ENCODE measurements at regions of chr6 and their contacts with region 1.

Region 1: DNA sequence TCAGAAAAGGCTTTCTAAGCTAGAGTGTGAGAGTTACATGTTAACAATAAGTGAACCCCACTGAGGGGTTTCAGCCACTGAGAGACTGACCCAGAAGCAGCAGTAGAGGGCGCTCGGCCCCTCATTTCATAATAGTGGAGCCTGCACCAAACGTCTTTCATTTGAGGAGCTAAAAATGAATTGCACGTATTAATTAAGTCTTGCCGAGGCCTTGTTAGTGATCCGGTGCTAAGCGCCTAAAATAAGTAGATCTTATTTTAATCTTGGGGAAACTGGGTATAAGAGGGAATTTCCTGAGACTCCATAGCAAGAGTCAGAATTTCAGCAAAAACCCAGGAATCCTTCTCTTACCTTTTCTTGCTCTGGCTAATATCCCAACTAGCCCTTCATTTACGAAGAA is 209.7 kb downstream of the FARS2 start:
- DNase-seq: peak; percentile 45 to 65 (median 60)
- ATAC-seq: peak; percentile 75 to 87 (median 86)
- H3K4me3 ChIP-seq: no peak overlapping the region
- H3K27ac ChIP-seq: peak overlapping the region in 1 of 12 donors; percentile 28
- H3K4me1 ChIP-seq: peaks cover 0 to 16% (median 9%) of the 10 kb centered on the region in 12 donors
- H3K27me3 ChIP-seq: no peaks in the 10 kb centered on the region
- CTCF ChIP-seq: peak; percentile 68 to 94 (median 86)
- POLR2A ChIP-seq: no peak

Region 2: GRCh38 chr6:5665173-5665572 is 194.1 kb after region 1 on chr6:
- intact Hi-C with region 1: loop called in 2 of 10 experiments (anchors 10 kb)
- DNase-seq: no peak
- ATAC-seq: peak in 1 of 4 donors; percentile 33
- H3K4me3 ChIP-seq: no peak overlapping the region
- H3K27ac ChIP-seq: no peak overlapping the region
- H3K4me1 ChIP-seq: peaks cover 0 to 12% (median 0%) of the 10 kb centered on the region in 12 donors
- H3K27me3 ChIP-seq: no peaks in the 10 kb centered on the region
- CTCF ChIP-seq: no peak
- POLR2A ChIP-seq: no peak

Region 3: DNA sequence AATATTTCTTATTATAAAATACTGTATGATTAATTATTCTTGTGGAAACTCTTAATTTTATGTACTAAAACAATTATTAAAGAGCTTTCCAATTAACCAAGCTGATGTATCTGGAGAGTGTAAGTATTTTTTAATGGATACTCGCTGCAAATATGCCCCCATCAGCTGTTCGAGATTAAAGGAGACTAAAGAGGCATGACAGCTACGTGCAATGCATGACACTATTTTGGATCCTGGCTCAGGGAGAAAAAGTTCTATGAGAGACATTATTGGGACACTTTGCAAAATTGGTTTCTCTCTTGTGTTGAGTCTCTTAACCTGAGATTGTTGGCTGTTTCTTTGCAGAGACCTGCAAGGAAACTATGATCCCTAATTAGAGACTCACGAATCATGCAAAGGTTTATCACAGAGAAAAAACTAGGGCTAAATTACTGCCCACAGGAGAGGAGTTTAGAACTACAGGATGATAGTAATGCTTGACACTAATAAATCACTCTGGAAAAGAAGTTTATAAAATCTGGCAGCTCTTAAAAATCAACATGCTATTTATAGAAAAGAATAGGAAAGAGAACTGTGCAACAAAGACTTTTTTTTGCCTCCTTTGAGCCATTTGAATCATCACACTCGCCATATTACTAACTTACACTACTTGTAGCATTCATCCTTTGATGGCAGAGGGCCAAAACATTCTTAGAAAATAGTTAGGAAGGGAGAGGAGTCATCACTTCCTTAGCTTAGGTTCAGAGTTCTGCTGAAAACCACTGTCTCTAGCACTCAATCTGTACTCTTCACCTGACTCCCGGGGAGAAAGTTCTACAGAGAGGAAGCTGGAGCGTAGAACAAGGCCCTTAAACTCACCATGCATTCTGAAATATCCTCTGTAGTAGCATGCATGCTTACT is 510.3 kb after region 1 on chr6:
- intact Hi-C with region 1: loop called in 2 of 10 experiments (anchors 10 kb)
- DNase-seq: no peak
- ATAC-seq: no peak
- H3K4me3 ChIP-seq: no peak overlapping the region
- H3K27ac ChIP-seq: no peak overlapping the region
- H3K4me1 ChIP-seq: peaks cover 0 to 28% (median 0%) of the 10 kb centered on the region in 12 donors
- H3K27me3 ChIP-seq: peaks cover 0 to 14% (median 0%) of the 10 kb centered on the region in 9 donors
- CTCF ChIP-seq: no peak
- POLR2A ChIP-seq: no peak

Region 4: DNA sequence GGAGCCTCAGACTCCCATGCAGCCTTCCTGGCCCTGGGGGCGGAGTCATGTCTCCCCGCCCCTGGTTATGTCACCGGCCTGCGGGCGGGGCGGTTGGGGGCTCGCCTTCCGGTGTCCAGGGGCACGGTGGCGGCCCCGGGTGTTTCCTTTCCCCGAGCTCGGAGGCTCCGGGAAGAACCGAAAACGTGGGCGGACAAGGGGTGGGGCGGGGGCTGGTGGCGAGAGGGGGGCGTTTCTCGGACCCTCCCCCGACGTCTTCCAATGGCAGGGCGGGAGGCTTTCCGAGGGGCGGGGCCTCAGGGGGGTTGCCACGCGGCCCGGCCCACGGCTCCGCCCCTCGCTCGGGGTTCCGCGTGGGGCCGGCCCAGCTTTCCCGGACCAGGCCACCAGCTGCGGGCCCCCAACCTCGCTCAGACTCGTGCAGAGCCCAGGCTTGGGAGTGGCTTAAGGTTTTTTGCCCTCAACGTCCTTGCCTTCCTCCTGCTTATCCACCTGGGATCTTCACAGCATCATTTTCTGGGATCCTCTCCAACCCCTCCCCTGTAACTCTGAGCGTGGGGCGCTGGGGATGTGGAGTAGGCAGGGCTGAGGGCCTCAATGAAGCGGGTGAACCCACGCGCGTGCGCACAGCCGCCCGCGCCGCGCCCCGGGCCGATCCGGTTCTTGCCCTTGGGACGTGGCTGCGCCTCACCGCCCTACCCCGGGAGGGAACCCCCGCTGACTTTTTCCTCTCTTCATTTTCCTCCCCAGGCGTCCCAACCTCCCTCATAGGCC is 537.8 kb after region 1 on chr6:
- intact Hi-C with region 1: loop called in 1 of 10 experiments (anchors 10 kb)
- DNase-seq: peak; percentile 72 to 88 (median 81)
- ATAC-seq: peak; percentile 81 to 87 (median 82)
- H3K4me3 ChIP-seq: peak overlapping the region; percentile 6 to 65 (median 60)
- H3K27ac ChIP-seq: peak overlapping the region in 11 of 12 donors; percentile 35 to 89 (median 68)
- H3K4me1 ChIP-seq: peaks cover 0 to 44% (median 20%) of the 10 kb centered on the region in 12 donors
- H3K27me3 ChIP-seq: peaks cover 46 to 89% (median 69%) of the 10 kb centered on the region in 9 donors
- CTCF ChIP-seq: no peak
- POLR2A ChIP-seq: no peak

Region 5: GRCh38 chr6:6547110-6547879 is 1076.3 kb after region 1 on chr6:
- intact Hi-C with region 1: loop called in 5 of 10 experiments (anchors 2 to 10 kb)
- DNase-seq: peak; percentile 84 to 90 (median 89)
- ATAC-seq: peak; percentile 95 to 97 (median 96)
- H3K4me3 ChIP-seq: peak overlapping the region; percentile 30 to 58 (median 52)
- H3K27ac ChIP-seq: peak overlapping the region in 5 of 12 donors; percentile 17 to 61 (median 47)
- H3K4me1 ChIP-seq: peaks cover 2 to 23% (median 9%) of the 10 kb centered on the region in 12 donors
- H3K27me3 ChIP-seq: peaks cover 0 to 19% (median 0%) of the 10 kb centered on the region in 9 donors
- CTCF ChIP-seq: peak; percentile 91 to 98 (median 96)
- POLR2A ChIP-seq: no peak

Measured in heart left ventricle (tissue), 16 donors.